ENCODE measurements at regions of chr11 and their contacts with region 1.

Region 1: DNA sequence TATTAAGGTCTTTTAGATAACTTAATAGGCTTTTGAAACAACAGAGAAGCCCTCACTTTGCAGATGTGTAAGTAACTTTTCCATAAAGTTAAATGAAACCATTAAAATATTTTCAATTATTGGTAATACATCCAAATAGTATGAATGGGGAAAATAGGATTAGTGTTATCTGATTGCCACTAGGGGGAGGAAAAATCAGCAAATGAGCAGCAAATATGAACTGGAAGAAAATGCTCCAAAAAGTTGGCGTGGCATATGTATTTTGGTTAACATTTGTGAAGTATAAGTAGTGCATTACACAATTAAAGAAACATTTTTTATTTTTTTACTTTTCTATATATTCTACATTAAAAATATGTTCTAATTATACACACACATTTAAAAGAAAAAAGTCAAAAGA is 259.8 kb upstream of the ANO5 start:
- DNase-seq: no peak
- ATAC-seq: no peak
- H3K4me3 ChIP-seq: no peak overlapping the region
- H3K27ac ChIP-seq: no peak overlapping the region
- H3K4me1 ChIP-seq: no peaks in the 10 kb centered on the region
- H3K27me3 ChIP-seq: no peaks in the 10 kb centered on the region

Region 2: DNA sequence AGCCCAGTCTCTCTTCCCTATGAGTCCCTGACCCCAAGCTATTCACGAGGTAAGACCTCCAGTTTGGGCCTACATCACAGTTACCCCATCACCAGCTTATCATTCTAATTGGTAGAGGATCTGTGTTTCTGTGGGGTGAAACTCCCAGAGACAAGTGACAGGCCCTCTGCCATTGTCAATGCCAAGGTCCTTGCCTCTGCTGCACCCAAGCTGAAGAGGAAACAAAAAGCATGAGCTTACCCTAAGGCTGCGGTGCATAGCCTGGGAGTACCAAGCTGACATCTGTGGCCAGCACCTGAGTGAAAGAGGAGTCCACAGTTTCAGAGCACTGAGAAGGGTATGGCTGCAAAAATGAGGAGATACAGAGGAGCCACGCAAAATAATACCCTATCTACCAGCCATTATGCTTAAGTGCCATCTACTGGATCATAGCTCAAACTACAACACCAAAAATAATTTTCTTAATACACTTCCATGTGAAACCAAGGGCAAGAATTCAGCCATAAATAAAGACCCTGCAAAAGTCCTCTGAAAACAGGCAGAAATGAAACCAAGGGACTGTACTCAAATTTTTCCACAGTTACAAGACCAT is 197.5 kb after region 1 on chr11:
- intact Hi-C with region 1: loop called in 1 of 4 experiments (anchors 10 kb)
- DNase-seq: no peak
- ATAC-seq: peak in 1 of 2 donors; percentile 31
- H3K4me3 ChIP-seq: no peak overlapping the region
- H3K27ac ChIP-seq: no peak overlapping the region
- H3K4me1 ChIP-seq: no peaks in the 10 kb centered on the region
- H3K27me3 ChIP-seq: no peaks in the 10 kb centered on the region